ENCODE measurements at regions of chr4 and their contacts with region 1.

Region 1: DNA sequence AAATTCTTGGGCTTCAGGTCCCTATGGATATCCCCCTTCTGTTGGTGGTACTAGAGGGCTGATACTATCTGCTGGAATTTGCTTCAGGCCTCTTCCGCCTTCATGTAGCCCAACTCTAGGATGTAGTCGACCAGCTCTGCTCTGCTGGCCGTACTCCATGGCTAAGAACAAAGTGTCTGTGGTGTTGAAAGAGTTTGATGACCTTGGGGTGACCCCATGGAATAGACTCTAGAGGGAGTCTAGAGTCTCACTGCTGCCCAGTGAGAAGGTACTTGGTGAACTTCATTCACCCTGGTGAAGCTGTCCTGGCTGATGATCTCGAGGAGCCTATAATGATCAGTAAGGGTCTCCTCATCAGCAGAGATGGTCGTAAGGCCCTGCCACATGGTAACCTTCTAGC is 11.7 kb downstream of the SOWAHB start:
- DNase-seq: no peak
- H3K4me3 ChIP-seq: no peak overlapping the region
- H3K27ac ChIP-seq: no peak overlapping the region
- H3K4me1 ChIP-seq: no peaks in the 10 kb centered on the region; a peak in 1 of 7 replicates
- H3K27me3 ChIP-seq: no peaks in the 10 kb centered on the region
- CTCF ChIP-seq: no peak
- EP300 ChIP-seq: no peak
- POLR2A ChIP-seq: no peak
- RAD21 ChIP-seq: no peak

Region 2: GRCh38 chr4:76791479-76791878 is 94.7 kb before region 1 on chr4:
- CTCF ChIA-PET with region 1: no interaction called
- POLR2A ChIA-PET with region 1: no interaction called
- DNase-seq: no peak
- H3K4me3 ChIP-seq: no peak overlapping the region
- H3K27ac ChIP-seq: no peak overlapping the region
- H3K4me1 ChIP-seq: no peaks in the 10 kb centered on the region
- H3K27me3 ChIP-seq: no peaks in the 10 kb centered on the region
- CTCF ChIP-seq: no peak
- EP300 ChIP-seq: no peak
- POLR2A ChIP-seq: no peak
- RAD21 ChIP-seq: no peak

Region 3: DNA sequence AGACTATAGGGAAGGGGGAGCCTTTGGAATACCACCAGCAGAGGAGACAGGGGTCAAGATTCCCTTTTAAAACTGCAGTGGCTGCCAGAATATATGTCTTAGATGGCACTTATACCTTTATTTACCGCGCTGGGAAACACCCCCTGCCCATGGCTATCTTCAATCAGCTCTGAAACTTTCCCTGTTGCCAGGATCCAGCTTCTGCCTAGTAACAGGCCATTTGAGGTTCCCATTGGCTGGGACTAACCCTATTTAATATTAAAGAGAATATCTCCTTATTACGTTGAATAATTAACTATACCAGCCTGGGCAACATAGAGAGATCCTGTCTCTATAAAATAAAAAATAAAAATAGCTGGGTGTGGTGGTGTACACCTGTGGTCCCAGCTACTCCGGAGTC is 12.0 kb before region 1 on chr4:
- CTCF ChIA-PET with region 1: interaction called, 11 read pairs
- POLR2A ChIA-PET with region 1: no interaction called
- DNase-seq: no peak
- H3K4me3 ChIP-seq: no peak overlapping the region
- H3K27ac ChIP-seq: no peak overlapping the region
- H3K4me1 ChIP-seq: peaks cover 0 to 4% (median 1%) of the 10 kb centered on the region in 4 experiments; a peak in 3 of 7 replicates
- H3K27me3 ChIP-seq: no peaks in the 10 kb centered on the region
- CTCF ChIP-seq: no peak
- EP300 ChIP-seq: no peak
- POLR2A ChIP-seq: no peak
- RAD21 ChIP-seq: no peak

Region 4: GRCh38 chr4:76896731-76897535 is 10.7 kb after region 1 on chr4:
- CTCF ChIA-PET with region 1: interaction called, 13 read pairs
- POLR2A ChIA-PET with region 1: no interaction called
- DNase-seq: no peak
- H3K4me3 ChIP-seq: peak overlapping the region; percentile 47 to 75 (median 61)
- H3K27ac ChIP-seq: no peak overlapping the region
- H3K4me1 ChIP-seq: peaks cover 0 to 2% (median 2%) of the 10 kb centered on the region in 4 experiments; a peak in 5 of 7 replicates
- H3K27me3 ChIP-seq: peaks cover 20 to 51% (median 44%) of the 10 kb centered on the region in 4 experiments
- CTCF ChIP-seq: no peak
- EP300 ChIP-seq: no peak
- POLR2A ChIP-seq: no peak
- RAD21 ChIP-seq: 0 out of 4 replicates have a peak, but pooled peaks of 1 of the 2 experiments have one; percentile 2

Region 5: GRCh38 chr4:76909711-76910110 is 23.5 kb after region 1 on chr4:
- CTCF ChIA-PET with region 1: no interaction called
- POLR2A ChIA-PET with region 1: no interaction called
- DNase-seq: no peak
- H3K4me3 ChIP-seq: no peak overlapping the region
- H3K27ac ChIP-seq: no peak overlapping the region
- H3K4me1 ChIP-seq: no peaks in the 10 kb centered on the region
- H3K27me3 ChIP-seq: no peaks in the 10 kb centered on the region
- CTCF ChIP-seq: no peak
- EP300 ChIP-seq: no peak
- POLR2A ChIP-seq: no peak
- RAD21 ChIP-seq: no peak

Region 6: DNA sequence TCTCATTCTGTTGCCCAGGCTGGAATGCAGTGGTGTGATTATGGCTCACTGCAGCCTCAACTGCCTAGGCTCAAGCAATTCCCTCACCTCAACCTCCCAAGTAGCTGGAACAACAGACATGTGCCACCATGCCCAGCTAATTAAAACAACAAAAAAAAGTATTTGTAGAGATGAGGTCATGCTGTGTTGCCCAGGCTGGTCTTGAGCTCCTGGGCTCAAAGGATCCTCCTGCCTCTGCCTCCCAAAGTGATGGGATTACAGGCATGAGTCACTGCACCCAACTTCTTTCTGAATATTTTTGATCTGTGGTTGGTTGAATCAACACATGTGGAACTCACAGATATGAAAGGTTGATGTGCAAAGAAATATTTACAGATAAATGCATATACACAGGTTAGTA is 44.9 kb after region 1 on chr4:
- CTCF ChIA-PET with region 1: no interaction called
- POLR2A ChIA-PET with region 1: no interaction called
- DNase-seq: no peak
- H3K4me3 ChIP-seq: no peak overlapping the region
- H3K27ac ChIP-seq: no peak overlapping the region
- H3K4me1 ChIP-seq: no peaks in the 10 kb centered on the region
- H3K27me3 ChIP-seq: no peaks in the 10 kb centered on the region
- CTCF ChIP-seq: no peak
- EP300 ChIP-seq: no peak
- POLR2A ChIP-seq: no peak
- RAD21 ChIP-seq: no peak

Measured in H1 (cell line).